ENCODE measurements at regions of chr14 and their contacts with region 1.

Region 1: DNA sequence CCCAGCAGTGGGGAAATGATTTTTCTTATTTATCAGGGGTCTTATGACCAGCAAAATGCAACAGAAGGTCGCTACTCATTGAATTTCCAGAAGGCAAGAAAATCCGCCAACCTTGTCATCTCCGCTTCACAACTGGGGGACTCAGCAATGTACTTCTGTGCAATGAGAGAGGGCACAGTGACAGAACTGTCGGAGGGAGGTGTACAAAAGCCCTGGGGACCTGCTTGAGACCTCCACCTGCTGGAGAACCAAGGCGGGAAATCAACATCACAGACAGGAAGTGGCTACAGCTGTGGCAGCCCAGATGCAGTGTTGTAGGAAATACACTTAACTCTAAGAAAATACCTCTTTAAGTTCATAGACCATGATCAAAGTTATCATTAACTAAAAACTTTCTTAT is 250.9 kb upstream of the OR4E1 start:
- DNase-seq: peak; percentile 86
- H3K4me3 Mint-ChIP-seq: peak overlapping the region; percentile 67
- H3K27ac Mint-ChIP-seq: peak overlapping the region; percentile 92
- H3K4me1 Mint-ChIP-seq: peaks cover 32% of the 10 kb centered on the region
- H3K27me3 Mint-ChIP-seq: no peaks in the 10 kb centered on the region

Region 2: DNA sequence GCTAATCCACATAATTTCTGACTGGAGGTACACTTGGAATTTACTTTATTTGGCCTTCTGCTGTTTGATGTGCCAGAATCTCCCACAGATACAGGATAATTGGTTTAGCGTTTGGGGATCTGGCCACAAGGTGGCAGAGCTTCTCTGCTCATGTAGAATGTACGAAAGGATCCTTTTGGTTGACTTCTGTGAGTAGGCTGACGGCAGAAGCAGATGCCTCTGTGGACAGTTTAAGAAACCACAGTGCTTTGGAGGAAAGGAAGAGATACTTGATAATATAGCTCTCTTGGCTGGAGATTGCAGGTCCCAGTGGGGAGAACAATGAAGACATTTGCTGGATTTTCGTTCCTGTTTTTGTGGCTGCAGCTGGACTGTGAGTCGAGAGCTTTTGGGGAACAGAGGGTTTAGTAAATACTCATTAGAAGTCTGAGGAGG is 175.6 kb before region 1 on chr14:
- intact Hi-C with region 1: no loop called
- DNase-seq: peak; percentile 85
- H3K4me3 Mint-ChIP-seq: peak overlapping the region; percentile 58
- H3K27ac Mint-ChIP-seq: peak overlapping the region; percentile 21
- H3K4me1 Mint-ChIP-seq: peaks cover 2% of the 10 kb centered on the region
- H3K27me3 Mint-ChIP-seq: peaks cover 32% of the 10 kb centered on the region

Region 3: GRCh38 chr14:21902650-21903103 is 21.8 kb before region 1 on chr14:
- intact Hi-C with region 1: no loop called
- DNase-seq: peak; percentile 82
- H3K4me3 Mint-ChIP-seq: peak overlapping the region; percentile 79
- H3K27ac Mint-ChIP-seq: peak overlapping the region; percentile 73
- H3K4me1 Mint-ChIP-seq: peaks cover 14% of the 10 kb centered on the region
- H3K27me3 Mint-ChIP-seq: peaks cover 7% of the 10 kb centered on the region

Region 4: DNA sequence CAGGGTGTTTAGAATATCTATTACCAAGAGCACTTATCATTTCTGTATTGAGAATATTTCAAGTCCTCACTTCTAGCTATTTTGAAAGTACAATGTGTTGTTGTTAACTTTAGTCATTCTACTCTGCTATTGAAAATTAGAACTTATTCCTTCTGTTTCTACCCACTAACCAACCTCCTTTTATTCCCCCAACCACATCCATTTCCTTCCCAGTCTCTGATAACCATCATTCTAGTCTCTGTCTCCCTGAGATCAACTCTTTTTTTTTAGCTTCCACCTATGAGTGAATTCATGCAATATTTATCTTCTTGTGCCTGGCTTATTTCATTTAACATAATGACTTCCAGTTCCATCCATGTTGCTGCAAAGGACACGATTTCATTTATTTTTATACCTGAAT is 39.7 kb after region 1 on chr14:
- intact Hi-C with region 1: loop called (anchors 5 kb)
- DNase-seq: no peak
- H3K4me3 Mint-ChIP-seq: peak overlapping the region; percentile 19
- H3K27ac Mint-ChIP-seq: peak overlapping the region; percentile 22
- H3K4me1 Mint-ChIP-seq: peaks cover 16% of the 10 kb centered on the region
- H3K27me3 Mint-ChIP-seq: peaks cover 5% of the 10 kb centered on the region